ENCODE measurements at regions of chr7 and their contacts with region 1.

Region 1: DNA sequence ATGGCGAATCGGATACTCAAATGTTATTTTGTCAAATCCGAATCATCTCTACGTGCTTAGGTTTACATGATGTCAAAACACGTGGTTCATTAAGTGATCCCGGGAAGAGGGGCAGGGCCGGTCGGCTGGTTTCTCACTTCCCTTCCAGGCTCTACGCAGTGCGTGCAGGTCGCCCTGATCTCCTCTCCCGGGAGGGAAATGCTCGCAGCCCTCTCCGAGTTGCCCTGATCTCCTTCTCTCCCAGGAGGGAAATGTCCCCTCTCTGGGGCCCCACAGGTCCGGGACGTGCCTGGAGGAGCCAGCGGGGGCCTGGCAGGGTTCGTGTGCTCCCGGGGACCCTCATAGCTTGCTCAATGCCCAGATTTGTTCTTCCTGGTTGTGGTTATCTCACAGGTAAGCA is 202.7 kb downstream of the DNAJB6 start:
- DNase-seq: no peak
- H3K4me3 Mint-ChIP-seq: no peak overlapping the region
- H3K27ac Mint-ChIP-seq: no peak overlapping the region
- H3K4me1 Mint-ChIP-seq: peaks cover 4% of the 10 kb centered on the region
- H3K27me3 Mint-ChIP-seq: peaks cover 7% of the 10 kb centered on the region

Region 2: DNA sequence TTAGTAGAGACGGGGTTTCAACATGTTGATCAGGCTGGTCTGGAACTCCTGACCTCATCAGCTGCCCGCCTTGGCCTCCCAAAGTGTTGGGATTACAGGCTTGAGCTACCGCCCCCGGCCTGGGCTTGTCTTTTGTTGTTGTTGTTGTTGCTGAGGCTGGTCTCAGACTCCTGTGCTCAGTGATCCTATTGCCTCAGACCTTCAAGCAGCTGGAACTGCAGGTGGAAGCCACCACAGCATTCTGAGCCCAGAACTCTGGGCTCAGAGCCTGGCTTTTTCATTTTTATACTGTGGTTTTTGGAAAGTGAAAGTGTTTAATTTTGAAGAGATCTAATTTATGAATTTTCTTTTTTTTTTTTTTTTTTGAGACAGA is 218.9 kb before region 1 on chr7:
- intact Hi-C with region 1: no loop called
- DNase-seq: no peak
- H3K4me3 Mint-ChIP-seq: no peak overlapping the region
- H3K27ac Mint-ChIP-seq: peak overlapping the region; percentile 26
- H3K4me1 Mint-ChIP-seq: peaks cover 10% of the 10 kb centered on the region
- H3K27me3 Mint-ChIP-seq: peaks cover 2% of the 10 kb centered on the region

Region 3: GRCh38 chr7:157372235-157373232 is 167.0 kb before region 1 on chr7:
- intact Hi-C with region 1: no loop called
- DNase-seq: no peak
- H3K4me3 Mint-ChIP-seq: no peak overlapping the region
- H3K27ac Mint-ChIP-seq: peak overlapping the region; percentile 8
- H3K4me1 Mint-ChIP-seq: peaks cover 42% of the 10 kb centered on the region
- H3K27me3 Mint-ChIP-seq: no peaks in the 10 kb centered on the region

Region 4: GRCh38 chr7:157444011-157444835 is 95.3 kb before region 1 on chr7:
- intact Hi-C with region 1: no loop called
- DNase-seq: no peak
- H3K4me3 Mint-ChIP-seq: no peak overlapping the region
- H3K27ac Mint-ChIP-seq: peak overlapping the region; percentile 29
- H3K4me1 Mint-ChIP-seq: no peaks in the 10 kb centered on the region
- H3K27me3 Mint-ChIP-seq: peaks cover 3% of the 10 kb centered on the region

Region 5: DNA sequence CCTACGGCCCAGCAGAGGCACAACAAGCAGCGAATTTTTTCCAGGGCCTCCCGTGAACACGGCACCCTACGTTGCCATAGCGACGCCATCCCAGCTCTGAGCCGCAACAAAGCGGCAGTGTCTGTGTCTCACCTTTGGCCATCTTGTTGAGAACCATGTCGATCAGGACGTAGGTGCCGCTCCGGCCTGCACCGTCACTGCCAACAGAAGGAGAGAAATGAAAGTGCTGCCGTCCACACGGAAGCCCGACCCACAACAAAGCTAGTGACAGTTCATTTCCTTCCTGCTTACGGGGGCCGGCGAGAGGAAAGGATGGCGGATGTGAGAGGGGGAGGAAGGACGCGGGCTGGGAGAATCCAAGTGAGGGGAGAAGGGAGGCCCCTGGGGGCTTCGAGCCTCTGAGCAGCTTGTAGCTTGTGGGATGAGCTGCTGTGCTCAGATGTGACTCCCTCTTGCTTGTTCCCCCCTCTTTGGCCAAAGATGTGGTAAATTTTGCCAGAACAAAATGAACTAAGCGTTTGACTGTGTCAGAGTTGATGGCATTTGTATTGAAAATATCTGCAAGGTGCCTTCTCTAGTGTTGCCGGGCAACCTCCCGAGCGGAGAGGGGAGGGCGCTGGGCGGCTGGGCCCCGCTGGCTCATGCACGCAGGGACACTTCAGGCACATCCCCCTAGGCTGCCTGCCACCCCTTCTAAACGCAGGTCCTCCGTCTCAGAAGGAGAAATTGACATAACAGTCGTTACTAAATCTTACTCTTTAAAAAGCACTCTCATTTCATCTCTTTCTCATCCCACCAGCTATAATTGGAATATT is 29.5 kb after region 1 on chr7:
- intact Hi-C with region 1: loop called (anchors 1 kb)
- DNase-seq: peak; percentile 88
- H3K4me3 Mint-ChIP-seq: peak overlapping the region; percentile 88
- H3K27ac Mint-ChIP-seq: peak overlapping the region; percentile 82
- H3K4me1 Mint-ChIP-seq: peaks cover 35% of the 10 kb centered on the region
- H3K27me3 Mint-ChIP-seq: peaks cover 4% of the 10 kb centered on the region

Region 6: GRCh38 chr7:157625973-157626742 is 86.6 kb after region 1 on chr7:
- intact Hi-C with region 1: no loop called
- DNase-seq: peak; percentile 68
- H3K4me3 Mint-ChIP-seq: peak overlapping the region; percentile 55
- H3K27ac Mint-ChIP-seq: peak overlapping the region; percentile 52
- H3K4me1 Mint-ChIP-seq: peaks cover 25% of the 10 kb centered on the region
- H3K27me3 Mint-ChIP-seq: peaks cover 23% of the 10 kb centered on the region

Measured in activated CD4-positive, alpha-beta T cell treated with anti-CD3 and anti-CD28 coated beads, Interleukin-2, amount 10 ng/mL, durations not matched to agents 24 days and 14 days (primary cell).